ENCODE measurements at regions of chr5 and their contacts with region 1.

Region 1: GRCh38 chr5:95961617-95962474 is at the start of gene ELL2:
- DNase-seq: peak; percentile 98
- H3K4me3 Mint-ChIP-seq: peak within 1 kb of the TSS; percentile 90
- H3K27ac Mint-ChIP-seq: peak within 1 kb of the TSS; percentile 91
- H3K4me1 Mint-ChIP-seq: peaks cover 28% of the 10 kb centered on the region
- H3K27me3 Mint-ChIP-seq: no peaks in the 10 kb centered on the region
- CTCF ChIP-seq: no peak
- total RNA-seq, gene ELL2: 144 and 147 TPM in 2 replicates

Region 2: GRCh38 chr5:95900383-95900958 is 61.4 kb before region 1 on chr5:
- CTCF ChIA-PET with region 1: interaction called, 3 read pairs
- POLR2A ChIA-PET with region 1: interaction called, 3 read pairs
- intact Hi-C with region 1: loop called (anchors 10 kb)
- DNase-seq: peak; percentile 40
- H3K4me3 Mint-ChIP-seq: no peak overlapping the region
- H3K27ac Mint-ChIP-seq: peak overlapping the region; percentile 59
- H3K4me1 Mint-ChIP-seq: peaks cover 26% of the 10 kb centered on the region
- H3K27me3 Mint-ChIP-seq: no peaks in the 10 kb centered on the region
- CTCF ChIP-seq: no peak

Region 3: GRCh38 chr5:95949810-95950209 is 12.0 kb before region 1 on chr5:
- CTCF ChIA-PET with region 1: interaction called, 13 read pairs
- POLR2A ChIA-PET with region 1: interaction called, 6 read pairs
- intact Hi-C with region 1: no loop called
- DNase-seq: no peak
- H3K4me3 Mint-ChIP-seq: no peak overlapping the region
- H3K27ac Mint-ChIP-seq: no peak overlapping the region
- H3K4me1 Mint-ChIP-seq: peaks cover 42% of the 10 kb centered on the region
- H3K27me3 Mint-ChIP-seq: no peaks in the 10 kb centered on the region
- CTCF ChIP-seq: no peak

Region 4: DNA sequence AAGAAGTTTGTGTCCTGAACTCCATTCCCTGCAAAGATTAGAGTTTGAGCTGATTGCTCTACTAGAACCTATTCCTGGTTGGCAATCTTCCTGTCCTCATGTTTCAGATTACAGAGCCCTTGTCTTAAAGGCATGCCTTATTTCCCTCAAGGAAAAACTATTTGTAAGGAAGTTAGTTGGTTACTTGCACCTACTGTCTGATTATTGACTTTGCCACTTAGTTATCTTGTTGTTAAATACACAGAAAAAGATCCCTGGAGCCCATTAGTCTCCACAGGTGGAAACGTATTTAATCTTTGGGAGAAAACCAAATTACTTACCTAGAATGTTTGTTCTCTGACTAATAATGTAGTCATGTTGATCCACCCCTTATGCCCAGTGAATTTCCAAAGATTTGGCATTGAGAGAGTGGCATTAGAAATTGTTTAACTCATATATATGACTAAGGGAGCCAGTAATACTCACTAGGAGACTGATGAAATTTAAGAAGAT is 132.1 kb after region 1 on chr5:
- CTCF ChIA-PET with region 1: interaction called, 5 read pairs
- POLR2A ChIA-PET with region 1: interaction called, 39 read pairs
- intact Hi-C with region 1: no loop called
- DNase-seq: peak; percentile 90
- H3K4me3 Mint-ChIP-seq: no peak overlapping the region
- H3K27ac Mint-ChIP-seq: peak overlapping the region; percentile 1
- H3K4me1 Mint-ChIP-seq: peaks cover 28% of the 10 kb centered on the region
- H3K27me3 Mint-ChIP-seq: no peaks in the 10 kb centered on the region
- CTCF ChIP-seq: no peak

Region 5: GRCh38 chr5:96151891-96152290 is 190.0 kb after region 1 on chr5:
- CTCF ChIA-PET with region 1: interaction called, 6 read pairs
- POLR2A ChIA-PET with region 1: interaction called, 17 read pairs
- intact Hi-C with region 1: loop called (anchors 5 kb)
- DNase-seq: no peak
- H3K4me3 Mint-ChIP-seq: no peak overlapping the region
- H3K27ac Mint-ChIP-seq: no peak overlapping the region
- H3K4me1 Mint-ChIP-seq: peaks cover 28% of the 10 kb centered on the region
- H3K27me3 Mint-ChIP-seq: no peaks in the 10 kb centered on the region
- CTCF ChIP-seq: no peak

Region 6: GRCh38 chr5:96256778-96257470 is 295.1 kb after region 1 on chr5:
- CTCF ChIA-PET with region 1: interaction called, 4 read pairs
- POLR2A ChIA-PET with region 1: interaction called, 10 read pairs
- intact Hi-C with region 1: no loop called
- DNase-seq: peak; percentile 76
- H3K4me3 Mint-ChIP-seq: no peak overlapping the region
- H3K27ac Mint-ChIP-seq: no peak overlapping the region
- H3K4me1 Mint-ChIP-seq: peaks cover 51% of the 10 kb centered on the region
- H3K27me3 Mint-ChIP-seq: no peaks in the 10 kb centered on the region
- CTCF ChIP-seq: no peak

Measured in MCF 10A (cell line).